Transverse colon (tissue), 4 donors: ENCODE measurements at regions of chr17 and their contacts with region 1.

Region 1: DNA sequence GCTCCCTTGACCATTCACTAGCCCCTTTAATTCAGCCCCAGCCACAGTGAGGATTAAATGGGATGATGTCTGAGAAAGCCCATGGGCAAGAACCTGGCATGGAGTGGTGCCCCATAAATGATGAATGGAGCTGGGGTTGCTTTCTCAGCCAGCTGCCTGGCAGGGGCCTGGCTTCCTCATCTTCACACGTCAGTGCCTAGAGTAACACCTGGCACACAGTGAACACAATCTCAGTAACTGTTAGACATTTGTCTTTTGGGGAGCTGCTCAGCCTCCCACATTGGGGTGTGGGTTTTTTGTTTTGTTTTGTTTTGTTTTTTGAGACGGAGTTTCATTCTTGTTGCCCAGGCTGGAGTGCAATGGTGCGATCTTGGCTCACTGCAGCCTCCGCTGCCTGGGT is 47.5 kb upstream of the MEOX1 start:
- DNase-seq: no peak
- H3K4me3 ChIP-seq: no peak overlapping the region
- H3K27ac ChIP-seq: no peak overlapping the region
- H3K4me1 ChIP-seq: peaks cover 0 to 9% (median 8%) of the 10 kb centered on the region in 4 donors
- H3K27me3 ChIP-seq: peaks cover 36% of the 10 kb centered on the region
- CTCF ChIP-seq: no peak
- EP300 ChIP-seq: no peak
- POLR2A ChIP-seq: no peak

Region 2: DNA sequence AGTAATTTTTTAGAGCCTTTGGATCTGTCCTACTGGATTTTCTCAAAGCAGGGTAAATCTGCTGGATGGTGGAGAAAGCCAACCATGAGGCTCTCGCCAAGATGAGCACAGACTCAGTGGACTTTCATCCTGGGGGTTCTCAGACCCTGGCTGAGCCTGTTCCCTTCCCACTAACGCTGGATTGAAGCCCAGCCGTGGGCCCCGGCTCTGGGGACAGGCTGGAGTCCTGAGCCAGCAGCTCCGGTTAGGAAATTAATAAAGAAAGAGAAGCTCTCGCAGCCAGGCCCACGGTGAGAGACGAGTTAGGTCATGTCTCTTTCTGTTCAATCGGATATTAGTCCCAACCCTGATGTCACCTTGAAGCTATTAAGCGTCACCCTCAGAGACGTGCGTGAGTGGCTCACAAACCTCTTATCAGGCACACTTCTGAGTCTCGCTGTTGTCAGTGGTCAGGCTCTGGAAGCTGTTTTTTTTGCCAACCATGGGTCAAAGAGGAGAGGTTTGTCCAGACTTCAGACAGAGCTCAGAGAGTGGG is 74.6 kb before region 1 on chr17:
- in situ Hi-C with region 1: no loop called
- intact Hi-C with region 1: no loop called
- DNase-seq: no peak
- H3K4me3 ChIP-seq: no peak overlapping the region
- H3K27ac ChIP-seq: peak overlapping the region in 1 of 4 donors; percentile 15
- H3K4me1 ChIP-seq: no peaks in the 10 kb centered on the region
- H3K27me3 ChIP-seq: peaks cover 5% of the 10 kb centered on the region
- CTCF ChIP-seq: no peak
- EP300 ChIP-seq: no peak
- POLR2A ChIP-seq: no peak

Region 3: GRCh38 chr17:43645765-43646481 is 63.3 kb before region 1 on chr17:
- in situ Hi-C with region 1: no loop called
- intact Hi-C with region 1: no loop called
- DNase-seq: peak; percentile 37
- H3K4me3 ChIP-seq: peak overlapping the region; percentile 26 to 50 (median 37)
- H3K27ac ChIP-seq: peak overlapping the region; percentile 65 to 73 (median 66)
- H3K4me1 ChIP-seq: peaks cover 0 to 12% (median 4%) of the 10 kb centered on the region in 4 donors
- H3K27me3 ChIP-seq: peaks cover 33% of the 10 kb centered on the region
- CTCF ChIP-seq: no peak
- EP300 ChIP-seq: no peak
- POLR2A ChIP-seq: no peak

Region 4: DNA sequence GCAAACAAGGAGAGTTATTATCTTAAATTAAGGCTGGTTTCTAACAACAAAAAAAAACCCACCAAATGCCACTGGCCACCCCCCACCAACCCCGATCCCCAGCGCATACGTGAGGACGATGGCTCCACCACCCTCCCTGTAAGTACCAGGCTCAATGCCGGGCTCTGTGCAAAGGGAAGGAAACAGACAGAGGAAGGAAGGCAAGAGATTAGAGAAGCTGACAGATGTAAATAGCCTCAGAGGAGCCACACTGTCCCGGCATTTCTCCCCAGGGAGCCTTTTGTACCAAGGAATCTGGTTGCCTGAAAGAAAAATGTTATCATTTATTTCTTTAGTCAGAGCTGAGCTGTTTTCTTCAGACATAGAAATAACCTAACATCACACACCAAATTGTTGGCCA is 36.3 kb after region 1 on chr17:
- in situ Hi-C with region 1: loop called in 3 of 4 experiments (anchors 5 to 10 kb)
- intact Hi-C with region 1: no loop called
- DNase-seq: no peak
- H3K4me3 ChIP-seq: no peak overlapping the region
- H3K27ac ChIP-seq: no peak overlapping the region
- H3K4me1 ChIP-seq: no peaks in the 10 kb centered on the region
- H3K27me3 ChIP-seq: peaks cover 49% of the 10 kb centered on the region
- CTCF ChIP-seq: no peak
- EP300 ChIP-seq: no peak
- POLR2A ChIP-seq: no peak

Region 5: DNA sequence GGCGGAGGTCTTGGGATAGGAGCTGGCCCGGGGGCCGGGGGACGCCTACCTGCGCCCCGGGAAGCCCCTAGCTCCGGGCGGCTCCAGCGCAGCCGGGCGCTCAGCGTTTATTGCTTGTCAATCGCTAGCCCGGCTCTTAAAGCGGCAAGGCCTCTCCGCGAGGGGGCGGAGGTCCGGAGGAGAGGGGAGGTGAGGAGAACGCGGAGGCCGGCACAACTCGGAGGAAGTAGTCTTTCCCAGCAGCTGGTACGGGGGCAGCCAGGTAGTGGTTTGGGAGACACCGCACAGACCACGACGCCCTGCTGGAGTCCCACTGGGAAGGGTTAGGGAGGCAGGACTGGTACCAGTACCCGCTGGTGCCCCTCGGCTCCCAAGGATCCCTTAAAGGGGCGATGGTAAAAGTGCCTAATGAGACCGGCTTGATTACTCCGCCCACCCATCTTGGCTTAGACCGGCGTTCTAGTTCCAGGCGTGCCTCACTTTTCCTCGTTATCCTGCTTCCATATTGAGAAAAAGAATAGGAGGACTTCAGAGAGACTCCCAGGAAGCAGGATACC is 198.3 kb after region 1 on chr17 and contains the start of gene MPP2:
- in situ Hi-C with region 1: no loop called
- intact Hi-C with region 1: no loop called
- DNase-seq: peak; percentile 69
- H3K4me3 ChIP-seq: peak within 1 kb of the TSS; percentile 28 to 60 (median 48)
- H3K27ac ChIP-seq: peak within 1 kb of the TSS; percentile 84 to 94 (median 85)
- H3K4me1 ChIP-seq: peaks cover 12 to 36% (median 26%) of the 10 kb centered on the region in 4 donors
- H3K27me3 ChIP-seq: peaks cover 59% of the 10 kb centered on the region
- CTCF ChIP-seq: peak in 1 of 5 experiments; percentile 24
- EP300 ChIP-seq: no peak
- POLR2A ChIP-seq: no peak
- total RNA-seq, gene MPP2: 3.4 to 4.9 (median 4.2) TPM